ENCODE measurements at regions of chr20 and their contacts with region 1.

Region 1: DNA sequence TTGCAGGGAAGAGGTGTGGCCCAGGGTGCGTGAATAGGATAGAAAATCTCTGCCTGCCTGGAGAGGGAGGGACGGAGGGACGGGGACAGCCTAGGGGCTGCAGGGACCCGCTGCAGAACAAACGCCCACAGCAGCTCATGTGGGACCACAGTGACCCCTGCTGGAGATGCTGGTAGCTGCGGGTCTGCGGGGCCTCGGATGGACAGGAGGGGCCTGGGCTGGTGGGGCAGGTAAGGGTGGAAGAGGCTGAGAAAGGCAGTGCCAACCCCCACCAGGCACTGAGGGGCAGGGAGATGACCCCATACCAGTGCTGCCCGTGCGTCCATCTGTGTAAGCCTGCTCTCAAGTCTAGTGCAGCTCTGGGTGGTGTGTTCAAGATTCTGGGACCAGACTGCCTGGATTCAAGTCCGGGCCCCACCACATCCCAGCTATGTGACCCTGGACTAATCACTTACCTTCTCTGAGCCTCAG is 39.4 kb downstream of the KIAA1755 start:
- DNase-seq: peak; percentile 44 to 79 (median 66)
- ATAC-seq: peak; percentile 58
- H3K4me3 ChIP-seq: no peak overlapping the region
- H3K4me3 Mint-ChIP-seq: no peak overlapping the region
- H3K27ac ChIP-seq: no peak overlapping the region
- H3K27ac Mint-ChIP-seq: no peak overlapping the region
- H3K4me1 ChIP-seq: no peaks in the 10 kb centered on the region
- H3K4me1 Mint-ChIP-seq: peaks cover 2% of the 10 kb centered on the region
- H3K27me3 ChIP-seq: no peaks in the 10 kb centered on the region
- H3K27me3 Mint-ChIP-seq: peaks cover 3% of the 10 kb centered on the region
- CTCF ChIP-seq: peak; percentile 76

Region 2: GRCh38 chr20:37651932-37652331 is 569.2 kb before region 1 on chr20:
- CTCF ChIA-PET with region 1: no interaction called
- POLR2A ChIA-PET with region 1: no interaction called
- intact Hi-C with region 1: loop called in 1 of 2 experiments (anchors 2 kb)
- DNase-seq: peak in 2 of 9 experiments; percentile 26 to 39
- ATAC-seq: no peak
- H3K4me3 ChIP-seq: no peak overlapping the region
- H3K4me3 Mint-ChIP-seq: no peak overlapping the region
- H3K27ac ChIP-seq: no peak overlapping the region
- H3K27ac Mint-ChIP-seq: no peak overlapping the region
- H3K4me1 ChIP-seq: no peaks in the 10 kb centered on the region
- H3K4me1 Mint-ChIP-seq: no peaks in the 10 kb centered on the region
- H3K27me3 ChIP-seq: no peaks in the 10 kb centered on the region
- H3K27me3 Mint-ChIP-seq: peaks cover 12% of the 10 kb centered on the region
- CTCF ChIP-seq: no peak

Region 3: DNA sequence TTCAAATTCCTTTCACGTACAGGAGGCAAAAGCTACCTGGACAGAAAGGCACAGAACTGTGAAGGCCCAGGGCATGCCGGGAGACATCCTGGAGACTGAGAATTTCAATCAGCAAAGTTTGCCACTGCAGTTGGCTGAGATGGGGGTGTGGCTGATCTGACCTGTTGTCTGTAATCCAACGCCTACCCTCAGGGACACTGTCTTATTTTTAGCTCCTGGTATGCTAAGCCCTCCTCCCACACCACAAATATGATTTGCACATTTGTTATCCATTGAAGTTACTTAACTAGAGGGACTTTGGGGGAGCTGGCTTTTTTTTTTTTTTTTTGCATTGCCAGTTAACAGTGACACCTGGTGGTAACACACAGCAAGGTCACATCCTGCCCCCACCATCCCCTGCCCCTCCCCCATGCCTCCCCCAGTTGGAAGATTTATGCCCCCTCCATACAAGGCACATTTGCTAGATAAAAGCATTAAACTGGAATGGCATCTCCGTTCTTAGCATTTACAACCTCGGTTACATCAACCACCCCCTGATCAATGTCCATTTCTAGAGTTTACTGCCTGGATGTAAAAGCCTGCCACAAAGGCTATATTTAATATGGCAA is 228.2 kb before region 1 on chr20:
- CTCF ChIA-PET with region 1: no interaction called
- POLR2A ChIA-PET with region 1: no interaction called
- intact Hi-C with region 1: no loop called
- DNase-seq: peak in 4 of 9 experiments; percentile 13 to 60 (median 32)
- ATAC-seq: no peak
- H3K4me3 ChIP-seq: no peak overlapping the region
- H3K4me3 Mint-ChIP-seq: no peak overlapping the region
- H3K27ac ChIP-seq: no peak overlapping the region
- H3K27ac Mint-ChIP-seq: no peak overlapping the region
- H3K4me1 ChIP-seq: no peaks in the 10 kb centered on the region
- H3K4me1 Mint-ChIP-seq: peaks cover 22% of the 10 kb centered on the region
- H3K27me3 ChIP-seq: no peaks in the 10 kb centered on the region
- H3K27me3 Mint-ChIP-seq: no peaks in the 10 kb centered on the region
- CTCF ChIP-seq: peak; percentile 51

Region 4: GRCh38 chr20:38073307-38074071 is 147.7 kb before region 1 on chr20:
- CTCF ChIA-PET with region 1: interaction called, 6 read pairs
- POLR2A ChIA-PET with region 1: no interaction called
- intact Hi-C with region 1: loop called in 1 of 2 experiments (anchors 5 kb)
- DNase-seq: peak in 3 of 9 experiments; percentile 11 to 59 (median 48)
- ATAC-seq: peak; percentile 51
- H3K4me3 ChIP-seq: no peak overlapping the region
- H3K4me3 Mint-ChIP-seq: no peak overlapping the region
- H3K27ac ChIP-seq: no peak overlapping the region
- H3K27ac Mint-ChIP-seq: peak overlapping the region; percentile 42
- H3K4me1 ChIP-seq: no peaks in the 10 kb centered on the region
- H3K4me1 Mint-ChIP-seq: peaks cover 25% of the 10 kb centered on the region
- H3K27me3 ChIP-seq: no peaks in the 10 kb centered on the region
- H3K27me3 Mint-ChIP-seq: no peaks in the 10 kb centered on the region
- CTCF ChIP-seq: peak; percentile 63

Region 5: GRCh38 chr20:38210741-38211140 is 10.4 kb before region 1 on chr20:
- CTCF ChIA-PET with region 1: interaction called, 18 read pairs
- POLR2A ChIA-PET with region 1: no interaction called
- intact Hi-C with region 1: no loop called
- DNase-seq: no peak
- ATAC-seq: no peak
- H3K4me3 ChIP-seq: no peak overlapping the region
- H3K4me3 Mint-ChIP-seq: no peak overlapping the region
- H3K27ac ChIP-seq: no peak overlapping the region
- H3K27ac Mint-ChIP-seq: no peak overlapping the region
- H3K4me1 ChIP-seq: no peaks in the 10 kb centered on the region
- H3K4me1 Mint-ChIP-seq: no peaks in the 10 kb centered on the region
- H3K27me3 ChIP-seq: no peaks in the 10 kb centered on the region
- H3K27me3 Mint-ChIP-seq: peaks cover 7% of the 10 kb centered on the region
- CTCF ChIP-seq: no peak

Region 6: DNA sequence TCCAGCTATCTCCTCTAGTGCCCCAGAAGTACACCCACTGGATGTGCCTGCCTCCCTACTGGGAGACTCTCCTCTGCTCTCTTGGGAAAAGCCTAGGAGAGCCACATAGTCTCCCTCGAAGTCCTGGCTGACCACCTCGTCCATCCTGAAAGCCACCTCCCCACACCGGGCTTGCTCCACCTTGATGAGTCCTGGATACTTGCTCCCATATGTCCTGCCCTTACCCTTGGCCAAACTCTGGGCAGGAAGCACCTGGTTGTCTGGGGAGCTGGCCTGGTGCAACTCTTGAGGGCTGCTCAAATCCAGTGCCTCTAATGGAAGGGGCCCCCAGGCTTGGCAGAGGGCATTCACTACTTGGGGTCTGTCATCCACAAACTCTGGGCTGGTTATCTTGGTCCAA is 20.0 kb after region 1 on chr20:
- CTCF ChIA-PET with region 1: interaction called, 10 read pairs
- POLR2A ChIA-PET with region 1: no interaction called
- intact Hi-C with region 1: no loop called
- DNase-seq: no peak
- ATAC-seq: no peak
- H3K4me3 ChIP-seq: no peak overlapping the region
- H3K4me3 Mint-ChIP-seq: no peak overlapping the region
- H3K27ac ChIP-seq: no peak overlapping the region
- H3K27ac Mint-ChIP-seq: no peak overlapping the region
- H3K4me1 ChIP-seq: no peaks in the 10 kb centered on the region
- H3K4me1 Mint-ChIP-seq: no peaks in the 10 kb centered on the region
- H3K27me3 ChIP-seq: peaks cover 0 to 2% of the 10 kb centered on the region in 2 experiments
- H3K27me3 Mint-ChIP-seq: peaks cover 9% of the 10 kb centered on the region
- CTCF ChIP-seq: no peak